Caco-2 (cell line): ENCODE measurements at regions of chr3 and their contacts with region 1.

Region 1: GRCh38 chr3:123546133-123546755 is 38.6 kb downstream of the HACD2 start:
- DNase-seq: no peak
- H3K4me3 ChIP-seq: no peak overlapping the region
- H3K4me3 Mint-ChIP-seq: no peak overlapping the region
- H3K27ac Mint-ChIP-seq: no peak overlapping the region
- H3K4me1 ChIP-seq: no peaks in the 10 kb centered on the region
- H3K4me1 Mint-ChIP-seq: no peaks in the 10 kb centered on the region
- H3K27me3 ChIP-seq: no peaks in the 10 kb centered on the region
- H3K27me3 Mint-ChIP-seq: no peaks in the 10 kb centered on the region
- CTCF ChIP-seq: no peak

Region 2: GRCh38 chr3:123524981-123525380 is 21.3 kb before region 1 on chr3:
- CTCF ChIA-PET with region 1: no interaction called
- POLR2A ChIA-PET with region 1: interaction called, 10 read pairs
- intact Hi-C with region 1: no loop called
- DNase-seq: peak in 1 of 2 experiments; percentile 9
- H3K4me3 ChIP-seq: no peak overlapping the region
- H3K4me3 Mint-ChIP-seq: no peak overlapping the region
- H3K27ac Mint-ChIP-seq: no peak overlapping the region
- H3K4me1 ChIP-seq: peaks cover 7% of the 10 kb centered on the region; the same call in 1 of the 2 replicates
- H3K4me1 Mint-ChIP-seq: peaks cover 6% of the 10 kb centered on the region
- H3K27me3 ChIP-seq: no peaks in the 10 kb centered on the region
- H3K27me3 Mint-ChIP-seq: no peaks in the 10 kb centered on the region
- CTCF ChIP-seq: no peak

Region 3: GRCh38 chr3:124063197-124063909 is 517.1 kb after region 1 on chr3:
- CTCF ChIA-PET with region 1: no interaction called
- POLR2A ChIA-PET with region 1: no interaction called
- intact Hi-C with region 1: no loop called
- DNase-seq: no peak
- H3K4me3 ChIP-seq: no peak overlapping the region
- H3K4me3 Mint-ChIP-seq: no peak overlapping the region
- H3K27ac Mint-ChIP-seq: no peak overlapping the region
- H3K4me1 ChIP-seq: no peaks in the 10 kb centered on the region
- H3K4me1 Mint-ChIP-seq: no peaks in the 10 kb centered on the region
- H3K27me3 ChIP-seq: peaks cover 1% of the 10 kb centered on the region; the same call in 1 of the 2 replicates
- H3K27me3 Mint-ChIP-seq: peaks cover 7% of the 10 kb centered on the region
- CTCF ChIP-seq: no peak